Left lung (tissue), 14 donors: ENCODE measurements at regions of chr7 and their contacts with region 1.

Region 1: DNA sequence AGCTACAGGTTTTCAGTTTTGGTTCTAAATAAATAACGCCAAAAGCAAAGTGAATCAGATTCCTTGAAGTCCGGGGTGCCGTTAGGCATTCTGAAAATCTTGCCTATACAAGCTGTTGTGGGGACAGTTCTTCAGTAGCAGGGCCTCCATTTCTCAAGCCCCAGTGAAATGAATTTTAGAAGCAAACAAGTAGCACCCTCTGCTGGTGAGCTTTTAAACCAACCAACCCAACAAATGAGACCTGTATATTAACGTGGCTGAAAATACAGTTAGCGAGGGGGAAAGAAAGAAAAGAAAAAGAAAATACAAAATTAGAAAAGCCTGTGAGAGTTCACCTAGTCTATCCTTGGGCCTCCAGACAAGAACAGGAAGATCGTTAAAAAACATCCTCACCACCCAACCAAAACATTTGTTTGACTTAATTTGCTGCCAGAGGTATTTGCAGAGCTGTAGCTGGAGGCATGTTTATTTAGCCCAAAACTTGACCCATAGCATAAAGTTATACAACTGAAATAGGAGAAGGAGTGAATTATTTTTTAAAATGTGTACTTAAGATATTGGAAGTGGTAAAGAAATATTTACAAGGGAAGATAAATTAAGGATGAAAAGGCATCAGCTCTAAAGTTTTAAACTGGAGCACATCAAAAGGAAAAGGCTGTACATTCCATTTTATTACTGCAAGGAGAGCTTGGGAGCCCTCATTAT is 98.9 kb downstream of the DYNC1I1 start:
- DNase-seq: peak in 2 of 4 donors; percentile 46 to 63
- ATAC-seq: peak; percentile 83
- H3K4me3 ChIP-seq: no peak overlapping the region
- H3K27ac ChIP-seq: no peak overlapping the region
- H3K4me1 ChIP-seq: no peaks in the 10 kb centered on the region
- H3K27me3 ChIP-seq: no peaks in the 10 kb centered on the region
- CTCF ChIP-seq: peak; percentile 26 to 37

Region 2: GRCh38 chr7:95710711-95711110 is 160.5 kb before region 1 on chr7:
- intact Hi-C with region 1: no loop called
- DNase-seq: no peak
- ATAC-seq: no peak
- H3K4me3 ChIP-seq: no peak overlapping the region
- H3K27ac ChIP-seq: no peak overlapping the region
- H3K4me1 ChIP-seq: no peaks in the 10 kb centered on the region
- H3K27me3 ChIP-seq: no peaks in the 10 kb centered on the region
- CTCF ChIP-seq: no peak

Region 3: GRCh38 chr7:95723592-95724180 is 147.5 kb before region 1 on chr7:
- intact Hi-C with region 1: loop called in 1 of 2 experiments (anchors 5 kb)
- DNase-seq: peak in 2 of 4 donors; percentile 39 to 70
- ATAC-seq: peak; percentile 73
- H3K4me3 ChIP-seq: no peak overlapping the region
- H3K27ac ChIP-seq: no peak overlapping the region
- H3K4me1 ChIP-seq: no peaks in the 10 kb centered on the region
- H3K27me3 ChIP-seq: no peaks in the 10 kb centered on the region
- CTCF ChIP-seq: peak in 1 of 2 donors; percentile 20

Region 4: DNA sequence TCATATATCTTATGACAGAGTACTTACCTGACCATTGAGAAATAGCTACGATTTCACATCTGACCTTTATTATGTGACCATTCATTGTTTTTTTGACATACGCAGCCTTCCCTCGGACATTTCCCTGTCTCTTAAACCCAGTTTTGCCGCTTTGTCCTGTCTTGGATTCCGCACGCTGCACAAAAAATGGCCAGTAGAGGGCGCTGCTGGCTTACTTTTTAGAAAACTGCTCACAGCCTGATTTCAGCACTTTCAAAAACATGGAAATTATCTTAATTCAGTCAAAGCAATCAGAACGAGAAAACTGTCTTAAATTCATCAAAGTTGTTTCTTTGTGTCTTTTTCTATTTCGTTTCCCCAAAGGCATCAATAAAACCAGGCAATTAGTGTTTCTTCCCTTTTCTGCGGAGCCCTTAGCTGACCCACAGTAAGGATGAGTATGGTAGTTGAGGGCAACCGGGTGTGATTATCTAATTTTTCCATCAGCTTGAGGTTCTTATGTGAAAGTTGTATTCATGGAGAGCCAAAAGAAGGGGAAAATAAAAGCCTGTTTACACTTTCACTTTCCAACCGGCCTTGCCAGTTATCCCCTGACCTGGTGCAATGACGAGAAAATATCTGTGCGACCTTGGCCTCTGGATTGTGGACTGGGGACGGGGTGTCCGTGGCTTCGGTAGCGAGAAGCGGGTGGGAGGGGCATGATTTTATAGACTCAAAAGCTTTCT is 45.5 kb after region 1 on chr7:
- intact Hi-C with region 1: no loop called
- DNase-seq: peak; percentile 57 to 89 (median 82)
- ATAC-seq: peak; percentile 86
- H3K4me3 ChIP-seq: peak overlapping the region in 1 of 2 donors; percentile 12
- H3K27ac ChIP-seq: no peak overlapping the region
- H3K4me1 ChIP-seq: no peaks in the 10 kb centered on the region
- H3K27me3 ChIP-seq: peaks cover 0 to 5% of the 10 kb centered on the region in 2 donors
- CTCF ChIP-seq: peak; percentile 85 to 89

Region 5: GRCh38 chr7:96169439-96169838 is 298.2 kb after region 1 on chr7:
- intact Hi-C with region 1: no loop called
- DNase-seq: no peak
- ATAC-seq: no peak
- H3K4me3 ChIP-seq: no peak overlapping the region
- H3K27ac ChIP-seq: no peak overlapping the region
- H3K4me1 ChIP-seq: no peaks in the 10 kb centered on the region
- H3K27me3 ChIP-seq: no peaks in the 10 kb centered on the region
- CTCF ChIP-seq: no peak